H1 (cell line): ENCODE measurements at regions of chr2 and their contacts with region 1.

Region 1: GRCh38 chr2:231530091-231531011 is at the start of gene NMUR1:
- DNase-seq: peak in 1 of 2 experiments; percentile 91
- H3K4me3 ChIP-seq: peak within 1 kb of the TSS; percentile 30 to 58 (median 36)
- H3K27ac ChIP-seq: no peak within 1 kb of the TSS
- H3K4me1 ChIP-seq: peaks cover 0 to 7% (median 3%) of the 10 kb centered on the region in 4 experiments; a peak in 2 of 7 replicates
- H3K27me3 ChIP-seq: peaks cover 1 to 18% (median 16%) of the 10 kb centered on the region in 4 experiments
- CTCF ChIP-seq: peak in 2 of 3 experiments; percentile 79 to 98; a peak in 3 of 4 replicates
- EP300 ChIP-seq: no peak
- POLR2A ChIP-seq: no peak
- RAD21 ChIP-seq: peak; percentile 43 to 64; a peak in 3 of 4 replicates
- total RNA-seq, gene NMUR1: 0.46 and 0.56 TPM in 2 replicates

Region 2: GRCh38 chr2:231497651-231498050 is 32.7 kb before region 1 on chr2:
- CTCF ChIA-PET with region 1: no interaction called
- POLR2A ChIA-PET with region 1: no interaction called
- DNase-seq: no peak
- H3K4me3 ChIP-seq: no peak overlapping the region
- H3K27ac ChIP-seq: no peak overlapping the region
- H3K4me1 ChIP-seq: no peaks in the 10 kb centered on the region
- H3K27me3 ChIP-seq: no peaks in the 10 kb centered on the region
- CTCF ChIP-seq: no peak
- EP300 ChIP-seq: no peak
- POLR2A ChIP-seq: no peak
- RAD21 ChIP-seq: no peak

Region 3: GRCh38 chr2:231514103-231514950 is 16.0 kb before region 1 on chr2:
- CTCF ChIA-PET with region 1: interaction called, 26 read pairs
- POLR2A ChIA-PET with region 1: interaction called, 6 read pairs
- DNase-seq: peak; percentile 93 to 98
- H3K4me3 ChIP-seq: peak overlapping the region; percentile 82 to 93 (median 88)
- H3K27ac ChIP-seq: peak overlapping the region; percentile 88
- H3K4me1 ChIP-seq: peaks cover 0 to 8% (median 5%) of the 10 kb centered on the region in 4 experiments; a peak in 4 of 7 replicates
- H3K27me3 ChIP-seq: no peaks in the 10 kb centered on the region
- CTCF ChIP-seq: no peak
- EP300 ChIP-seq: no peak
- POLR2A ChIP-seq: peak; percentile 93 to 97
- RAD21 ChIP-seq: no peak

Region 4: GRCh38 chr2:231541645-231542044 is 11.3 kb after region 1 on chr2:
- CTCF ChIA-PET with region 1: interaction called, 20 read pairs
- POLR2A ChIA-PET with region 1: interaction called, 5 read pairs
- DNase-seq: peak in 1 of 2 experiments; percentile 90
- H3K4me3 ChIP-seq: no peak overlapping the region
- H3K27ac ChIP-seq: no peak overlapping the region
- H3K4me1 ChIP-seq: 0 out of 7 replicates have a peak, but pooled peaks cover 0 to 2% (median 0%) of the 10 kb centered on the region in 4 experiments
- H3K27me3 ChIP-seq: no peaks in the 10 kb centered on the region
- CTCF ChIP-seq: peak; percentile 93 to 98 (median 93)
- EP300 ChIP-seq: no peak
- POLR2A ChIP-seq: no peak
- RAD21 ChIP-seq: peak; percentile 54 to 70; a peak in 3 of 4 replicates

Region 5: DNA sequence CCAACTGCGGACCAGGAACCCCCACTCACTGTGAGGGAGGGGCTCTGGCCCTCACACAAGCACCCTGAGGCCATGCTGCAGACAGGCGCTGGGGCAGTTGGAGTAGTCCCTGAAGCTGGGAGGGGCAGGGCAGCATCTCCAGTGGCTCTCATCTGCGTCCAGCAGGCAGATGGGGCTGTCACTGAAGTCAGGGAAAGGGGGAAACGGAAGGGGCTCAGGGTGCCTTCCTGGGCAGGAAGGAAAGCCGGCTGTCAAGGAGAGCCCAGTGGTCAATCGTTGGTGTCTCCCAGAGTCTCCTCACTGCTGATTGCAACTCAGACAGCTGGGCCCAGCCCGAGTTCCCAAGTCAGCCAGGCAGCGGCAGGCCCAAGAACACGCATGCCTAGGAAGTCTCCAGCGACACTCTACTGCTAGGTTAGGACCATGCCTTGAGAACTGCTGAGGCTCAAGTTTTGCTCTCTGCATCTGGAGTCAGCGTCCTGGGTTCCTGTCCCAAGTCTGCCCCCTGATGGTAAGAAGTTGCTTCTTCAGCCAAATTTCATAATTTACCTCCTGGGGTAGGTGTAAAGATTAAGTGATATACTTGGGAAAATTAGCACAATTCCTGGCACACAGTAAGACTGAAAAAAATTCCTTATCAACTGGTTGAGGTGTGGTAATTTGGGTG is 27.4 kb after region 1 on chr2:
- CTCF ChIA-PET with region 1: interaction called, 49 read pairs
- POLR2A ChIA-PET with region 1: interaction called, 3 read pairs
- DNase-seq: peak; percentile 50 to 60
- H3K4me3 ChIP-seq: no peak overlapping the region
- H3K27ac ChIP-seq: no peak overlapping the region
- H3K4me1 ChIP-seq: no peaks in the 10 kb centered on the region; a peak in 1 of 7 replicates
- H3K27me3 ChIP-seq: no peaks in the 10 kb centered on the region; a peak in 1 of 7 replicates
- CTCF ChIP-seq: peak; percentile 51 to 88 (median 86)
- EP300 ChIP-seq: no peak
- POLR2A ChIP-seq: no peak
- RAD21 ChIP-seq: peak; percentile 75 to 83

Region 6: DNA sequence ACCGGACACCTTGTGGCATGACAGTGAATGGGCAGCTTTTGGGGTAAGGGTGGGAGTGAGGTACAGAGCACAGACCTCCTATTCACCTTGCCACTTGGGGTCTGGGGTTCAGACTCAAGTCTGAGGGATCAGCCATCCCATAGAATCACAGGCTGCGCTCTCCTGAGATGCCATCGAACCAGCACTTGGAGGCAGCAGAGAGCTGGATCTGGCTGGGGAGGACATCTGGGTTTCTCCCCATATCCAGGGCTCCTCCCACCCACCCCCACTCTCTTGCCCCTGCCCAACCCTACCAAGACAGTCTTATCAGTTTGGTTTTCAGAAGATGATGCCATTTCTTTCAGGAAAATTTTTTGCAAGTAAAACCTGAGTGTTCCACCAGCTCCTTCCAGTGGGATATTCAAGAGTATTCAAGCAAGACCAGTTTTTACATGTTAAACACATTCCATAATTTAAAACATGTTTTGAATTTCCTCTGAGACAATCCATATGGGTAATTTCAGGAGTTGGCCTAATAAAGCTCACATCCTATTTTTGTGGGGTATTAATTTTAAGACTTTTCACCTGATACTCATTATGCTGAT is 33.1 kb after region 1 on chr2:
- CTCF ChIA-PET with region 1: interaction called, 49 read pairs
- POLR2A ChIA-PET with region 1: interaction called, 3 read pairs
- DNase-seq: peak; percentile 73 to 78
- H3K4me3 ChIP-seq: no peak overlapping the region
- H3K27ac ChIP-seq: no peak overlapping the region
- H3K4me1 ChIP-seq: peaks cover 0 to 5% (median 3%) of the 10 kb centered on the region in 4 experiments; a peak in 5 of 7 replicates
- H3K27me3 ChIP-seq: no peaks in the 10 kb centered on the region
- CTCF ChIP-seq: peak; percentile 90 to 95 (median 93)
- EP300 ChIP-seq: no peak
- POLR2A ChIP-seq: no peak
- RAD21 ChIP-seq: peak; percentile 92

Region 7: GRCh38 chr2:231642631-231643494 is 112.5 kb after region 1 on chr2:
- CTCF ChIA-PET with region 1: no interaction called
- POLR2A ChIA-PET with region 1: no interaction called
- DNase-seq: no peak
- H3K4me3 ChIP-seq: no peak overlapping the region
- H3K27ac ChIP-seq: no peak overlapping the region
- H3K4me1 ChIP-seq: peaks cover 3 to 9% (median 3%) of the 10 kb centered on the region in 4 experiments; a peak in 5 of 7 replicates
- H3K27me3 ChIP-seq: no peaks in the 10 kb centered on the region
- CTCF ChIP-seq: no peak
- EP300 ChIP-seq: no peak
- POLR2A ChIP-seq: no peak
- RAD21 ChIP-seq: no peak